PC-9 (cell line): ENCODE measurements at regions of chr22 and their contacts with region 1.

Region 1: GRCh38 chr22:20922141-20922751 is 5.0 kb downstream of the CRKL start:
- DNase-seq: no peak
- H3K4me3 ChIP-seq: no peak overlapping the region
- H3K27ac ChIP-seq: no peak overlapping the region
- H3K4me1 ChIP-seq: peaks cover 20% of the 10 kb centered on the region
- H3K27me3 ChIP-seq: no peaks in the 10 kb centered on the region
- CTCF ChIP-seq: no peak

Region 2: GRCh38 chr22:20829491-20830134 is 92.6 kb before region 1 on chr22:
- CTCF ChIA-PET with region 1: no interaction called
- POLR2A ChIA-PET with region 1: no interaction called
- intact Hi-C with region 1: no loop called
- DNase-seq: no peak
- H3K4me3 ChIP-seq: no peak overlapping the region
- H3K27ac ChIP-seq: no peak overlapping the region
- H3K4me1 ChIP-seq: no peaks in the 10 kb centered on the region
- H3K27me3 ChIP-seq: no peaks in the 10 kb centered on the region
- CTCF ChIP-seq: no peak

Region 3: GRCh38 chr22:20951932-20952380 is 29.7 kb after region 1 on chr22:
- CTCF ChIA-PET with region 1: no interaction called
- POLR2A ChIA-PET with region 1: interaction called, 10 read pairs
- intact Hi-C with region 1: loop called (anchors 5 kb)
- DNase-seq: no peak
- H3K4me3 ChIP-seq: no peak overlapping the region
- H3K27ac ChIP-seq: no peak overlapping the region
- H3K4me1 ChIP-seq: peaks cover 9% of the 10 kb centered on the region; the same call in 1 of the 2 replicates
- H3K27me3 ChIP-seq: no peaks in the 10 kb centered on the region
- CTCF ChIP-seq: no peak